Prostate gland (tissue), 2 donors: ENCODE measurements at regions of chr6 and their contacts with region 1.

Region 1: DNA sequence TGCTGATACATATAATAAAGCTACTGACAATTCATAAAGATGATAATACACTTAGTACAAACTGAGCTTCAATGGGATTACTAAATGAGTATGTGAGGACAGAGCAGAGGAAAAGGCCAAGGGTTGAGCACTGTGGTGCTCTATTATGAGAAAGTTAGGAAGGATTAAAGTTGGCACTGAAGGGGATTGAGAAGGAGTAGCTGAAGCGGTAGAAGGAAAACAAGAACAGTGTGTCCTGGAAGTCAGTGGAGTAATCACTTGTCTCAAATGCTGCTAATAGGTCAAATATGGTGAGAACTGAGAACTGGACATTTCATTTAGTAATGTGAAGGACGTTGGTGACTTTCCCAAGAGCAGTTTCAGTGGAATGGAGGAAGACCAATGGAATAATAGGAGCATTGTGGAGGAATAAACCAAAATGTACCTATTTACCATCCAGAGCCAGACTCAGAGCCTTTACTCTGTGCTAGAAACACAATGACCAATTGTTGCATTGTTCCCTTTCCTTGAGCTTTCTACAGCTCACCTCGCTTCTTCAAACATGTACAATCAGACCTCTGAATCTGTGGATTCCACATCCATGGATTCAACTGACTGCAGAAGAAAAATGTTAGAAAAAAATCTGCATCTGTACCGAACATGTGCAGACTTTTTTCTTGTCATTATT is 255.9 kb downstream of the LAMA2 start:
- DNase-seq: no peak
- H3K4me3 ChIP-seq: no peak overlapping the region
- H3K27ac ChIP-seq: peak overlapping the region in 1 of 2 donors; percentile 17
- H3K4me1 ChIP-seq: no peaks in the 10 kb centered on the region
- H3K27me3 ChIP-seq: no peaks in the 10 kb centered on the region
- CTCF ChIP-seq: no peak
- POLR2A ChIP-seq: no peak

Region 2: DNA sequence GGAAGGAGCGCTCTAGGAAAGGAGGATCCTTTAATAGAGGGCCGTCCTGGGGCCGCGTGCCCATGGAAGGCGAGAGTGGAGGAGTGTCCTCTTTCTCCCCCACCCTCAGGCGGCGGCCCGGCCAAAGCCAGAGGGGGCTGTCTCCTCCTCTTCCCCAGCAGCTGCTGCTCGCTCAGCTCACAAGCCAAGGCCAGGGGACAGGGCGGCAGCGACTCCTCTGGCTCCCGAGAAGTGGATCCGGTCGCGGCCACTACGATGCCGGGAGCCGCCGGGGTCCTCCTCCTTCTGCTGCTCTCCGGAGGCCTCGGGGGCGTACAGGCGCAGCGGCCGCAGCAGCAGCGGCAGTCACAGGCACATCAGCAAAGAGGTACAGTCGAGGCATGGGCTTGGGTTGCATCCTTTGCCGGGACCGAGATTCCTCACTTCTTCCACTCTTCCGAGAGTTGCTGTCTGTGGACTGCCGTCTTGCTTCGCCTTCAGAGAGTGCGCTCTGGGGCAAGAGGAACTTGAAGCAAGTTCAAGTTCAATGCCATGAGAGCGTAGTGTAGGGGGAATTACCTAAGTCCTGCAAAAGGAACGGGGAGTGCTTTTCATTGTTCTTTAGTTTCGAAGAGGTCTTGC is 255.8 kb before region 1 on chr6 and contains the start of gene LAMA2:
- intact Hi-C with region 1: loop called (anchors 5 kb)
- DNase-seq: peak; percentile 37
- H3K4me3 ChIP-seq: peak within 1 kb of the TSS; percentile 40 to 41
- H3K27ac ChIP-seq: peak within 1 kb of the TSS; percentile 47 to 70
- H3K4me1 ChIP-seq: no peaks in the 10 kb centered on the region
- H3K27me3 ChIP-seq: no peaks in the 10 kb centered on the region
- CTCF ChIP-seq: no peak
- POLR2A ChIP-seq: no peak
- total RNA-seq, gene LAMA2: 10.1 to 89.1 TPM

Region 3: GRCh38 chr6:129055796-129056195 is 83.1 kb before region 1 on chr6:
- intact Hi-C with region 1: no loop called
- DNase-seq: no peak
- H3K4me3 ChIP-seq: no peak overlapping the region
- H3K27ac ChIP-seq: no peak overlapping the region
- H3K4me1 ChIP-seq: no peaks in the 10 kb centered on the region
- H3K27me3 ChIP-seq: no peaks in the 10 kb centered on the region
- CTCF ChIP-seq: no peak
- POLR2A ChIP-seq: no peak

Region 4: GRCh38 chr6:129248946-129249345 is 110.1 kb after region 1 on chr6:
- intact Hi-C with region 1: no loop called
- DNase-seq: no peak
- H3K4me3 ChIP-seq: no peak overlapping the region
- H3K27ac ChIP-seq: no peak overlapping the region
- H3K4me1 ChIP-seq: no peaks in the 10 kb centered on the region
- H3K27me3 ChIP-seq: no peaks in the 10 kb centered on the region
- CTCF ChIP-seq: no peak
- POLR2A ChIP-seq: no peak